ENCODE measurements at regions of chr18 and their contacts with region 1.

Region 1: GRCh38 chr18:38115201-38115600 is 549.6 kb upstream of the CELF4 start:
- DNase-seq: no peak
- ATAC-seq: no peak
- H3K4me3 ChIP-seq: no peak overlapping the region
- H3K4me3 Mint-ChIP-seq: no peak overlapping the region
- H3K27ac ChIP-seq: no peak overlapping the region
- H3K27ac Mint-ChIP-seq: peak overlapping the region in 1 of 9 donors; percentile 16
- H3K4me1 ChIP-seq: no peaks in the 10 kb centered on the region
- H3K4me1 Mint-ChIP-seq: no peaks in the 10 kb centered on the region
- H3K27me3 ChIP-seq: no peaks in the 10 kb centered on the region
- H3K27me3 Mint-ChIP-seq: no peaks in the 10 kb centered on the region

Region 2: GRCh38 chr18:38174594-38174993 is 59.4 kb after region 1 on chr18:
- CTCF ChIA-PET with region 1: no interaction called
- POLR2A ChIA-PET with region 1: no interaction called
- intact Hi-C with region 1: loop called in 1 of 2 experiments (anchors 10 kb)
- DNase-seq: no peak
- ATAC-seq: no peak
- H3K4me3 ChIP-seq: no peak overlapping the region
- H3K4me3 Mint-ChIP-seq: no peak overlapping the region
- H3K27ac ChIP-seq: no peak overlapping the region
- H3K27ac Mint-ChIP-seq: no peak overlapping the region
- H3K4me1 ChIP-seq: no peaks in the 10 kb centered on the region
- H3K4me1 Mint-ChIP-seq: no peaks in the 10 kb centered on the region
- H3K27me3 ChIP-seq: no peaks in the 10 kb centered on the region
- H3K27me3 Mint-ChIP-seq: no peaks in the 10 kb centered on the region